Ovary (tissue), 10 donors: ENCODE measurements at regions of chr1 and their contacts with region 1.

Region 1: DNA sequence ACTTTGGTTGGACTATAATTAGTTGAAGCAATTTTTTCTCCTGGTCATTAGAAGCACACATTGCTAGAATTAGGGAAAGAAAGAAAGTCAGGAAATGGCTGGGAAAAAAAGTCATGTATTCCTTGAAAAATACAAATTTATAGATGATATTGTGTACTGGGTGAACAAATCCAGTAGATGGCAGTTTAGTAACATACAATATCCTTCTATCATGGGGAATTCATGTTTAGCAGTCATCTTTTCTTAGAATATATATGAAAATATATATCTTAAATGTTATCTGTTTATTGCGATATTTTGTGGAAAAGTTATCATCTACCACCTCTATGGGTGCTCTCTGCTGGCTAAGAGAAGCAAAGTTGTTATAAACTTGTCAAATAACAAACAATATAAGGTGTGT is 13.1 kb upstream of the ZRANB2 start:
- DNase-seq: no peak
- H3K4me3 ChIP-seq: no peak overlapping the region
- H3K27ac ChIP-seq: no peak overlapping the region
- H3K4me1 ChIP-seq: peaks cover 2% of the 10 kb centered on the region
- H3K27me3 ChIP-seq: peaks cover 2% of the 10 kb centered on the region
- CTCF ChIP-seq: no peak
- EP300 ChIP-seq: no peak
- POLR2A ChIP-seq: no peak

Region 2: DNA sequence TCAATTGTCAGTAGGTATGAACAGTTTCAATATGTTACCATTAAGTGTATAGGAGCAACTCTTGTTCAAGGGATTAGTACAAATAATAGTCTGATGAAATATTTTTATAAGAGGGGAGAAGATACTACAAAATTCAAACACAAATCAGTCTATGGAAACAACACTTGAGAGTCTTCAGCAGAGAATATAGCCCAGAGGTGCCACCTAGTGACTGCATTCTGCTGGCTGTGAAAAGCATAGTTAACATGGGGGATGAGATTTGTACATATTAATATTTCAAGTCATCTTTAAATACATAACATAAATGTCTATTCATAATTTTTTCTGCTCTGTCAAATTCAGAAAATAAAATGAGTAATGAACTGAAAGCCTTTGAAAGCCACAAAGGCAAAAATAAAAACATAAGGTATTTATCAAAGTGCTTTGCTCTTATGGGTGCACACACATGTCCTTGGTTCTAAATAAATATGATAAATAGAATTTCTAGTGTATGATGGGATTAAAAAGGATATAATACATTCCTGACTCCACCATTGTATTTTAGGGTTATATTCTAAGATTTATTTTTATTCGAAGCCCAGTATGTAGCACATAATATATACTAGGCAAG is 427.8 kb after region 1 on chr1:
- intact Hi-C with region 1: loop called in 1 of 4 experiments (anchors 10 kb)
- DNase-seq: peak; percentile 19 to 53 (median 49)
- H3K4me3 ChIP-seq: no peak overlapping the region
- H3K27ac ChIP-seq: no peak overlapping the region
- H3K4me1 ChIP-seq: no peaks in the 10 kb centered on the region
- H3K27me3 ChIP-seq: no peaks in the 10 kb centered on the region
- CTCF ChIP-seq: peak in 1 of 3 donors; percentile 55
- EP300 ChIP-seq: no peak
- POLR2A ChIP-seq: no peak